AG04449 (cell line): ENCODE measurements at regions of chr19 and their contacts with region 1.

Region 1: DNA sequence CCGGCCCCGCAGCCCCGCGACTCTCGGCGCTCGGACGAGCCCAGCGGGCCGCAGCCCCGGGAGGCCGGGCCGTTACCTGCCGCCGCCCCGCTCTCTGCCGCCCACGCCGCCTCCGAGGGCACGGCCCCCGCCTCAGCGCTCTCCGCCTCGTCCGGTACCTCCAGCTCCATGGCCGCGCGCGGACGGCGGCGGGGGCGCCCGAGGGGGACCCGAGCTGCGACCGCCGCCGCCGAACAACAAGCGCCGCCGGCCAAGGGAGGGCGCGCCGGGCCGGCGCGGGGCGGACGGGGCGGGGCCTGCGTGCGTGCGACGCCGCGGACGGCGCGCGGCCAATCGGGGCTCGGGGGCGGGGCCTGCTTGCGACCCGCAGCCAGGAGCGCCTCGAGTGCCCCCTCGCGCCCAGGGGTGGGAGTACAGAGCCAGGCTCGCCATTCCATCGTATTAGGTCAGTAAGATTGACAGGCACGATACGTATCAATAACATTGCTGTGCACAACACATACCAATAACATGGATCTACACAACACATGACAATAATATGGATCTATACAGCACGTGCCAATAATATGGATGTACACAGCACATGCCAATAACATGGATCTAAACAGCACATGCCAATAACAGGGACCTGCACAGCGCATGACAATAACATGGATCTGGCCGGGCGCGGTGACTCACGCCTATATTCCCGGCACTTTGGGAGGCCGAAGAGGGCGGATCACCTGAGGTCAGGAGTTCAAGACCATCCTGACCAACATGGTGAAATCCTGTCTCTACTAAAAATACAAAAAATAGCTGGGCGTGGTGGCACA is at the start of gene PIP5K1C:
- DNase-seq: no peak
- H3K4me3 ChIP-seq: peak within 1 kb of the TSS; percentile 74
- CTCF ChIP-seq: peak; percentile 86

Region 2: GRCh38 chr19:3687774-3688706 is 12.4 kb before region 1 on chr19:
- CTCF ChIA-PET with region 1: interaction called, 33 read pairs
- POLR2A ChIA-PET with region 1: no interaction called
- DNase-seq: no peak
- H3K4me3 ChIP-seq: no peak overlapping the region
- CTCF ChIP-seq: no peak